Spleen (tissue), 13 donors: ENCODE measurements at regions of chr18 and their contacts with region 1.

Region 1: GRCh38 chr18:37537868-37538525 is 27.6 kb downstream of the CELF4 start:
- DNase-seq: peak; percentile 85
- H3K4me3 ChIP-seq: no peak overlapping the region
- H3K27ac ChIP-seq: no peak overlapping the region
- H3K4me1 ChIP-seq: peaks cover 0 to 9% (median 0%) of the 10 kb centered on the region in 6 donors
- H3K27me3 ChIP-seq: peaks cover 0 to 53% (median 6%) of the 10 kb centered on the region in 7 donors
- CTCF ChIP-seq: peak; percentile 14 to 87 (median 73)
- POLR2A ChIP-seq: no peak

Region 2: GRCh38 chr18:37322492-37323035 is 215.4 kb before region 1 on chr18:
- intact Hi-C with region 1: no loop called
- DNase-seq: no peak
- H3K4me3 ChIP-seq: no peak overlapping the region
- H3K27ac ChIP-seq: no peak overlapping the region
- H3K4me1 ChIP-seq: peaks cover 0 to 4% (median 0%) of the 10 kb centered on the region in 6 donors
- H3K27me3 ChIP-seq: peaks cover 0 to 22% (median 0%) of the 10 kb centered on the region in 7 donors
- CTCF ChIP-seq: peak in 9 of 11 experiments; percentile 16 to 80 (median 68)
- POLR2A ChIP-seq: no peak

Region 3: GRCh38 chr18:37385846-37386778 is 151.9 kb before region 1 on chr18:
- intact Hi-C with region 1: loop called (anchors 5 kb)
- DNase-seq: no peak
- H3K4me3 ChIP-seq: no peak overlapping the region
- H3K27ac ChIP-seq: no peak overlapping the region
- H3K4me1 ChIP-seq: peaks cover 0 to 6% (median 0%) of the 10 kb centered on the region in 6 donors
- H3K27me3 ChIP-seq: peaks cover 0 to 23% (median 0%) of the 10 kb centered on the region in 7 donors
- CTCF ChIP-seq: peak; percentile 31 to 78 (median 65)
- POLR2A ChIP-seq: no peak